ENCODE measurements at regions of chr9 and their contacts with region 1.

Region 1: DNA sequence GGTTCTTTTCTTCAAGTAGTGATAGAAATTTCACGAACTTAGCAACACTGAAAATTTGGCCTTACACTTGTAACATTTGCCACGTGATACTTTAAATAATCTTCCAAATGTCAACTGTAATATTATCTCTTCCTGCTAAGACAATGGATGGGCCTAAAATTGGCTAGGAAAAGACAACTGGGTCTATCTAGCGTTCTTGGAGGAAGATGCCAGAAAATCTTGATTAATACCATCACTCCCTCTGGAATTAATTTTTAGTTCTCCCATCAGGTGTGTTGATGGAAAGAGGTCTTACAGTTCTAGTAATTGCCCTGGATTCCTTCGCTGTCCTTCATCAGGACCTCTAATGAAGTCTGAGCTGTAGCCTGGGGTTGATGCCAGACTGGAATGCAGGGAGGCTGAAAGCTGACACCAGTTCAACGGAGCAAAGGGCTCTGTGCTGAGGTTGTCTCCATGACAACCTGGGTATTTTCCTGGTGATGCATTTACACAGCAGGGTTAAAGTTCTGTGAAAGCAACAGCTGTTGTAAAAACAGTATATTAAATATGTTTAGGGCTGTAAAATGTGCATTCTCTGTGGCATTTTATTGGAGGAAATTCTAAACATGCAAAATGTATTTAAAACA is 92.3 kb downstream of the GAS1 start:
- DNase-seq: peak; percentile 50
- H3K4me3 ChIP-seq: no peak overlapping the region
- CTCF ChIP-seq: no peak

Region 2: GRCh38 chr9:86843206-86843605 is 11.8 kb before region 1 on chr9:
- CTCF ChIA-PET with region 1: interaction called, 11 read pairs
- POLR2A ChIA-PET with region 1: no interaction called
- DNase-seq: no peak
- H3K4me3 ChIP-seq: no peak overlapping the region
- CTCF ChIP-seq: no peak

Region 3: DNA sequence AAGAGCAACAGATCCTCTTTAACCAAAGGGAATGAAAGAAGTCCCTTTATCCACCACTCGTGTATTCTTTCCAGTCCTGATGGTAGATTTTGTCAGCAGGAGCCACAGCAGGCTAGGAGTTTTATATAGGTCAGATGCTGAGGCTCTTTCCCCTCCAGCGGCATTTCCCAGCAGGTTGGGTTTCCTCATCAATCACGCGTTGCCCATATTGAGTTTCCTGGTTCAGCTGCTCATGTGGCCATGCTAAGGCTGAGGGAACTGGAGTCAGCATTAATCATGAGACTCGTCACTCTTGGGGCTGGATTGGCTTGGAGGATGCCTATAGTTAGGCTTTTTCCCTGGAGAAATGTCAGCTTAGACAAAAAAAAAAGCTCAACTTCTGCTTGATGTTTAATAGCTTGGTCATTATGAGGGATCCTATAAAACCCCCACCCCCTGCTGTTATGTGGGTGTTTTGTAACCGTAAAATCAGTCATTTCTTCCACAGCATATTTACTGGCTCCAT is 285.6 kb after region 1 on chr9:
- CTCF ChIA-PET with region 1: no interaction called
- POLR2A ChIA-PET with region 1: no interaction called
- DNase-seq: no peak
- H3K4me3 ChIP-seq: no peak overlapping the region
- CTCF ChIP-seq: no peak